ENCODE measurements at regions of chr12 and their contacts with region 1.

Region 1: DNA sequence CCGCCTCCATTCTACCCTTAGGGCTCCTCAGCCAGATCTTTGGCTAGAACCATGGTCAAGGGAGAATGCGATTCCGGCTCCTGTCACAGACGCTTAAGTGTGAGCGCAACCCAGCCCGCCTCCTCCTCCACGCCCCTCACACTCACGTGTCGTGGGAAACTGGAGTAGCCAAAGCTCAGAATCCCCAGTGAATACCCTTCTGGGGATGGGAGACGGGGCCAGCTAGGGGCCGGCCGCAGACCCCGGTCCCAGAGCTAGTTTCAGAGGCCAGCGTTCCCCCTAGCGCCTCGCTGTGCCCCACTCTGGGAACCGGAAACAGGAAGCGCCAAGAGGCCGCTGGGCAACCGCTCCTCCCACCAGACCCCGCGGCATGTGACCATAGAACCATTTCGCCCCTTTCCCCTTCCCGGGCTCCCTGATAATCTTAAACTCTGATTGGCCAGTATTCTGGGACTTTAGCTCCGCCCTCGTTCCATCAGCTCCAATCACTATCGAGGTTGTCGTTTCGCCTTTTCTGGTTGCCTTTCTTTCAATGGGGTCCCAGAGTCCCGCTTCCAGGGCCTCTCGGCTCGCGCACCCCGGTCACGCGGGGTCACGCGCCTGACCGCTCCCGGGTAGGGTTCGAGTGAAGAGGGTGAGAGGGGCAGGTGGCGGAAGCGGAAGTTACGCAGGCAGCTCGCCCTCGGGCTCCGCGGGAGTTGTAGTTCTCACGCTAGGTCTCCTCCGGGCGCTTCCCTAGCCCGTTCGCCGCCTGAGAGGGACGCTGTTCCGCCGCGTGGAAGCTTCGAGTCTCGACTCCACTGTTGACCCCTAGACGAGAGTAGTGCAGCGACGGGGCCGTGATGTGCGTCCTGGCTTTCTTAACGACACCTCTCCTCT is at the start of gene M6PR:
- DNase-seq: peak; percentile 97
- H3K4me3 ChIP-seq: peak within 1 kb of the TSS; percentile 72 to 97 (median 96)
- H3K27ac ChIP-seq: peak within 1 kb of the TSS; percentile 92
- H3K4me1 ChIP-seq: peaks cover 8% of the 10 kb centered on the region
- H3K27me3 ChIP-seq: no peaks in the 10 kb centered on the region
- CTCF ChIP-seq: peak; percentile 47 to 67
- total RNA-seq, gene M6PR: 117 to 165 TPM

Region 2: DNA sequence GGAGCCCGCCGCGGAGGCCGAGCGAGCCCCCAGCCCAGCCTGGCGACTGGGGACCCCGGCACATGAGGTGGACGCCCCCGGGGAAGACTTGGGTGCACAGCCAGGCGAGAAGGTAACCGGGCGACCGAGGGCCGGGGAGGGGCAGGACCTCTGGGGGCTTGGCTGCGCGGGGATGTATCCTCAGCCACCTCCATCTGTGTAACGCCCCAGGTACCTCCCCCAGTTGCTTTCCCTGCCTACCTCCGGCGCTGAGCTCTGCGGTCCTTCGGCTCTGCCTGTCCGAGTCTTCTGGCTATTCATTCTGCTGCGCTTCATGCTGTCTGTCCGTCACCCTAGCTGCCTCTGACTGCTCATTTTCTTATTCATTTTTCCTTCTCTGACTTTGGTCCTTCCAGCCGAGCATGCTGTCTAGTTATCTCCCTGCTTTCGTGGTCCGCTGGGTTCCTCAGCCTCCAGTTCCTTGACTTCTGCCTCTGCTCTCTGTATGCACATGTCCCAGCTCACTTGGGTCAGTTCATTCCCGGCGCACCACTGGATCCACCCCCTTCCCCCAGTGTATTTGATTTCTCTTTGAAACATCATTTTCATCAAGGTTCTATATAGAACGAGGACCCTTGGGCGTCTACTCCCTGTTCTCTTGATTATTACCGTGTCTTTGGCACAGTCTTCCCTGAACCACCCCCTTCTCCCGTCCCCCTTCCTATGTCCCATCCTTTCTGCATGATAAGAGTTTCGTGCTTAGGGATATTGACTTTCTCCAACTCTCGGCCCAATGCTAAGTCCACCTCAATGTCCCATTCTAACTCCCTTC is 34.7 kb before region 1 on chr12:
- CTCF ChIA-PET with region 1: no interaction called
- dilution Hi-C with region 1: no loop called
- in situ Hi-C with region 1: no loop called
- intact Hi-C with region 1: loop called (anchors 2 kb)
- DNase-seq: peak; percentile 75
- H3K4me3 ChIP-seq: peak overlapping the region; percentile 43 to 71 (median 69)
- H3K27ac ChIP-seq: no peak overlapping the region
- H3K4me1 ChIP-seq: peaks cover 25% of the 10 kb centered on the region
- H3K27me3 ChIP-seq: no peaks in the 10 kb centered on the region
- CTCF ChIP-seq: no peak

Region 3: GRCh38 chr12:8989413-8989812 is 39.8 kb after region 1 on chr12 and contains the start of gene KLRG1:
- CTCF ChIA-PET with region 1: no interaction called
- dilution Hi-C with region 1: no loop called
- in situ Hi-C with region 1: no loop called
- intact Hi-C with region 1: no loop called
- DNase-seq: no peak
- H3K4me3 ChIP-seq: no peak within 1 kb of the TSS
- H3K27ac ChIP-seq: no peak within 1 kb of the TSS
- H3K4me1 ChIP-seq: no peaks in the 10 kb centered on the region
- H3K27me3 ChIP-seq: no peaks in the 10 kb centered on the region
- CTCF ChIP-seq: no peak
- total RNA-seq, gene KLRG1: 0.35 TPM in 1 of 2 donors, not detected in the other

Region 4: DNA sequence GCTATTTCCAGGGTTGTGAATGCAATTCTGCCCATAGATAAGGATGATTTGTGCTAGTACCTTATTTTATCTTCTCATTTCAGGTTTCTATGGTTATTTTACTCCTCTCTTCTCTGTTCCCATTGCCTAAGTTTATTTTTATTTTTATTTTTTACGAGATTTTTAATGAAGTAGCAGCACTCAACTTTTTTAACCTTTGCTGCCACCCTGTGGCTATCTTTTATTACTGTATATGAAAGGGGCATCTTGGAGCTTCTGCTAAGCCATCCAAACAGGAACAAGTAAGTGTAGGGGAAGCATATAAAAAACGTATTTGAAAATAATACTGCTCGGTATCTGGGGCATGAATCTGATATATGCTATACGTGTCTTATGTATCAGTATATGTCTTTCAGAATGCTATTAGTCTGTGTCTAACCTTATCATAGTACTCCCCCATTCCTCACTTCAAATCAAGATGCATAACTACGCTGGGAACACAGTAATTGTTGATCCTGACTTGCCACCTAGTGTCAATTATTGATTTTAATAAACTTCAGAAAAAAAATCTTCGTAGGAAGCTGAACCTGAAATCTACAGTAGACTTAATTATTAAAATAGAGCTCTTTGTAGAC is 100.0 kb after region 1 on chr12:
- CTCF ChIA-PET with region 1: interaction called, 5 read pairs
- dilution Hi-C with region 1: no loop called
- in situ Hi-C with region 1: loop called in 1 of 2 experiments (anchors 10 kb)
- intact Hi-C with region 1: no loop called
- DNase-seq: peak; percentile 28
- H3K4me3 ChIP-seq: no peak overlapping the region
- H3K27ac ChIP-seq: no peak overlapping the region
- H3K4me1 ChIP-seq: peaks cover 6% of the 10 kb centered on the region
- H3K27me3 ChIP-seq: no peaks in the 10 kb centered on the region
- CTCF ChIP-seq: peak; percentile 50 to 54

Measured in mammary epithelial cell (primary cell).